ENCODE measurements at regions of chr5 and their contacts with region 1.

Region 1: DNA sequence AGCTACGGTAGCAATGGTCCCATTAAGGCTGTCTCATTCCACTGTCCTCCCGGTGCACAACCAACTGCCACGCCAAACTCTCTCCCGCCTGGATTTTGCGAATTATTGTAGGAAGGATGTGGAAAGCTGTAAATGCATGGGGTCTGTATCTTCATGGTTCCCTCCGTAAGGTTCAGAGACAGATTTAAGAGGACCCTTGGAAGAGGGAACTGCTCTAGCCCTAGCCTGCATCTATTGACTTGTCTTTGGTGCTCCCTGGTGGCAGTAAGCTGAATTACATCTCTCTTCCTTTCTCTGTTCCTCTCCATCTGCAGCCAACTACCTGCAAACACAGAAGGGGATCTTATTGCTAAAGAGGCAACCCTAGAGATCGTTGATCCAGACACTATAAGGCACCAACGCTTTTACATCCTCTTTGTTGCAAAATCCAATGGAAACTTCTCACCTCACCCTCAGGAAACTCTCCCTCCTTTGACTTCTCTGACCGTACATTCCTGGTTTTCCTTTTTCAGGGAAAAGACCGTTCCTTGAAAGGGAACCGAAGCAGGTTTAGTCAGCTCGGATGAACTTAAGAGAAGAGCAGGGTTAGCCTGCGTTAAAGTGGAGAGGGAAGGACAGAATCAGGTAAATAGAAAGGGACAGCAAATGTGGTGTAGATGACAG is 11.9 kb downstream of the CAPSL start:
- DNase-seq: peak in 1 of 2 experiments; percentile 81
- H3K4me3 ChIP-seq: no peak overlapping the region
- H3K27ac ChIP-seq: no peak overlapping the region
- H3K4me1 ChIP-seq: no peaks in the 10 kb centered on the region
- H3K27me3 ChIP-seq: peaks cover 5 to 23% (median 17%) of the 10 kb centered on the region in 4 experiments
- CTCF ChIP-seq: peak in 2 of 3 experiments; percentile 84 to 93; a peak in 3 of 4 replicates
- EP300 ChIP-seq: no peak
- POLR2A ChIP-seq: no peak
- RAD21 ChIP-seq: peak; percentile 95 to 97

Region 2: GRCh38 chr5:35651002-35651756 is 275.3 kb before region 1 on chr5:
- CTCF ChIA-PET with region 1: interaction called, 45 read pairs
- POLR2A ChIA-PET with region 1: interaction called, 5 read pairs
- DNase-seq: peak; percentile 3 to 47
- H3K4me3 ChIP-seq: no peak overlapping the region
- H3K27ac ChIP-seq: no peak overlapping the region
- H3K4me1 ChIP-seq: 0 out of 7 replicates have a peak, but pooled peaks cover 0 to 3% (median 0%) of the 10 kb centered on the region in 4 experiments
- H3K27me3 ChIP-seq: peaks cover 0 to 2% (median 0%) of the 10 kb centered on the region in 4 experiments; a peak in 1 of 7 replicates
- CTCF ChIP-seq: peak; percentile 10 to 66 (median 59)
- EP300 ChIP-seq: no peak
- POLR2A ChIP-seq: no peak
- RAD21 ChIP-seq: peak; percentile 55 to 70; a peak in 3 of 4 replicates

Region 3: GRCh38 chr5:35665096-35665495 is 261.4 kb before region 1 on chr5:
- CTCF ChIA-PET with region 1: interaction called, 22 read pairs
- POLR2A ChIA-PET with region 1: no interaction called
- DNase-seq: no peak
- H3K4me3 ChIP-seq: no peak overlapping the region
- H3K27ac ChIP-seq: no peak overlapping the region
- H3K4me1 ChIP-seq: no peaks in the 10 kb centered on the region
- H3K27me3 ChIP-seq: no peaks in the 10 kb centered on the region
- CTCF ChIP-seq: no peak
- EP300 ChIP-seq: no peak
- POLR2A ChIP-seq: no peak
- RAD21 ChIP-seq: no peak

Region 4: DNA sequence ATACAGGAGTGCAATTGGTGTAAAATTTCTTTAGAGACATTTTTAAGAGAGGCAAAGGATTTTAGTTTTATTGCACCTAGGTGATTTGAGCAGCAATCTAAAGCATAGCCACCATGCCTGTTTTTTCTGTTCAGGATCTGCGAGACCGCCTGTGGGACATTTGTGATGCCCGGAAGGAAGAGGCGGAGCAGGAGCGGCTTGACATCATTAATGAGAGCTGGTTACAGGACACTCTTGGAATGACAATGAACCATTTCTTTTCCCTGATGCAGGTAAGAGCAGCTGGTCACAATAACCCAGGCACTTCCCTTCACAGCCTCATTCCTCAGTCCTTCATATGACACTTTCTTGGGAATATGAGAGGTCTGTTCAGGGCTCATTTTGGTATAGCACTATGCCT is 173.0 kb before region 1 on chr5:
- CTCF ChIA-PET with region 1: interaction called, 13 read pairs
- POLR2A ChIA-PET with region 1: no interaction called
- DNase-seq: no peak
- H3K4me3 ChIP-seq: no peak overlapping the region
- H3K27ac ChIP-seq: no peak overlapping the region
- H3K4me1 ChIP-seq: peaks cover 0 to 6% (median 1%) of the 10 kb centered on the region in 4 experiments; a peak in 2 of 7 replicates
- H3K27me3 ChIP-seq: peaks cover 46 to 93% (median 66%) of the 10 kb centered on the region in 4 experiments
- CTCF ChIP-seq: no peak
- EP300 ChIP-seq: no peak
- POLR2A ChIP-seq: no peak
- RAD21 ChIP-seq: no peak

Region 5: DNA sequence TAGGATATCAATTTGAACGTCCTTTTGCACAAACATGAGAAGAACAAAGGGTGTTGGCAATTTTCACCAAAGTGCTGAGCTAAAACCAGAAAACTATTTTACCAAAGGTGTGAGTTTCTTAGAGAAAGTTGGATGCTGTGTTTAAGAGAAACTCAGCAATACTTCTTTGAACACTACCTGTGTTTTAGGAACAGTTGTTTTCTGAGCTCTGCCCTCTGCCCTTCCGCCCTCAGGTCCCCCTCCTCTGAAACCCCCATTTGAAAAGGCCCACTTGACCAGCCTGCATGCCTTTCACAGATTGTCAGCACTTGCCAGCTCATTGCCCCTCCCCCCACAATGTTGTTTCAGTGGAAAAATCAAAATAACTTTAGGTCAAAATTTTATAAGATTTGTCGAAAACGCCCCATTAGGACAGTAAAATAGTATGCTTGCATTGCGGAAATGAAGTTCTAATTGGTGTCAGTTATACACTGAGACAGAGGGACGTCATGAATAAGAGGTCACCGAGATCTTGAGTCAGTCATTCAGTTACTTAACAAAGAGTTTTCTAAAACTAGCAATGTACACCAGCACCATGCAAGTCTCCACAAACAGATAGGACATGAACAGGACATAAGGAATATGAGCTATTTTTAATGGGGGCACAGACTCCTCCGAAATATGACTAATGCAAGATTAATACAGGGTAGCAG is 131.7 kb before region 1 on chr5:
- CTCF ChIA-PET with region 1: interaction called, 13 read pairs
- POLR2A ChIA-PET with region 1: no interaction called
- DNase-seq: no peak
- H3K4me3 ChIP-seq: no peak overlapping the region
- H3K27ac ChIP-seq: no peak overlapping the region
- H3K4me1 ChIP-seq: peaks cover 0 to 6% (median 2%) of the 10 kb centered on the region in 4 experiments; a peak in 2 of 7 replicates
- H3K27me3 ChIP-seq: no peaks in the 10 kb centered on the region
- CTCF ChIP-seq: no peak
- EP300 ChIP-seq: no peak
- POLR2A ChIP-seq: no peak
- RAD21 ChIP-seq: no peak

Region 6: GRCh38 chr5:35908228-35908627 is 18.3 kb before region 1 on chr5:
- CTCF ChIA-PET with region 1: interaction called, 11 read pairs
- POLR2A ChIA-PET with region 1: no interaction called
- DNase-seq: no peak
- H3K4me3 ChIP-seq: no peak overlapping the region
- H3K27ac ChIP-seq: no peak overlapping the region
- H3K4me1 ChIP-seq: peaks cover 0 to 3% (median 0%) of the 10 kb centered on the region in 4 experiments; a peak in 1 of 7 replicates
- H3K27me3 ChIP-seq: peaks cover 0 to 1% (median 0%) of the 10 kb centered on the region in 4 experiments; a peak in 1 of 7 replicates
- CTCF ChIP-seq: no peak
- EP300 ChIP-seq: no peak
- POLR2A ChIP-seq: no peak
- RAD21 ChIP-seq: no peak

Region 7: DNA sequence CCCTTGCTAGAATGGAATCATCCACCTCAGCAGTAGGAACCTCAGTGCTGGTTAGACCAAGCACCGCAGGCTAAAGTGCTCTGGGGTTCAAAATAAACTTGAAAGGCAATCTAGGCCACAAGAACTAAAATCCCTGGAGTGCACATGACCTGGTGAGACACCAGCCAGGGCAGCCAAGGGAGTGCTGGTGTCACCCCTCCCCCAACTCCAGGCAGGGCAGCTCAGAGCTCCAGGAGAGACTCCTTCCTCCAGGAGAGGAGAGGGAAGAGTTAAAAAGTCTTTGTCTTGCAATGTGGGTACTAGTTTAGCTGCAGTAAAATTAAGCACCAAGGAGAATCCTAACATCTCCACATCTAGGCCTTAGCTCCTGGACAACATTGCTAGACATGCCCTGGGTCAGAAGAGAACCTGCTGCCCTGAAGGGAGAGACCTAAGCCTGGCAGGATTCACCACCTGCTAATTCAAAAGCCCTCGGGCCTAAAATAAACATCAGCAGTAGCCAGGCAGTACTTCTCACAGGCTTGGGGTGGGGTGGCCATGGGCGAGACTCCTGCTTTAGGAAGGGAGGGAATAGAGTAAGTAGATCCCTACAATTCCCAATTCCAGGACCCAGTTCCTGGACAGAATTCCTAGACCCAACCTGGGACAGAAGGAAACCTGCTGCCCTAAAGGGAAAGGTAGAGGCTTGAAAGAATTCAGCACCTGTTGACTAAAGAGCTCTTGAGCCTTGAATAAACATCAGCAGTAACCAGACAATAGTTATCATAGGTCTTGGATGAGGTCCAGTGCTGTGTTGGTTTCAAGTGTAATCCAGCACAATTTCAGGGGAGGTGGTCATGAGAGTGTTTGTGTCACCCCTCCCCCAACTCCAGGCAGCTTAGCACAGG is 114.4 kb after region 1 on chr5:
- CTCF ChIA-PET with region 1: interaction called, 14 read pairs
- POLR2A ChIA-PET with region 1: no interaction called
- DNase-seq: no peak
- H3K4me3 ChIP-seq: no peak overlapping the region
- H3K27ac ChIP-seq: no peak overlapping the region
- H3K4me1 ChIP-seq: peaks cover 0 to 6% (median 1%) of the 10 kb centered on the region in 4 experiments; a peak in 3 of 7 replicates
- H3K27me3 ChIP-seq: no peaks in the 10 kb centered on the region
- CTCF ChIP-seq: no peak
- EP300 ChIP-seq: no peak
- POLR2A ChIP-seq: no peak
- RAD21 ChIP-seq: no peak

Region 8: GRCh38 chr5:36168737-36169136 is 242.2 kb after region 1 on chr5:
- CTCF ChIA-PET with region 1: no interaction called
- POLR2A ChIA-PET with region 1: no interaction called
- DNase-seq: no peak
- H3K4me3 ChIP-seq: no peak overlapping the region
- H3K27ac ChIP-seq: no peak overlapping the region
- H3K4me1 ChIP-seq: no peaks in the 10 kb centered on the region
- H3K27me3 ChIP-seq: no peaks in the 10 kb centered on the region
- CTCF ChIP-seq: no peak
- EP300 ChIP-seq: no peak
- POLR2A ChIP-seq: no peak
- RAD21 ChIP-seq: no peak